ENCODE measurements at regions of chr14 and their contacts with region 1.

Region 1: GRCh38 chr14:39897657-39898056 is 465.4 kb upstream of the FBXO33 start:
- DNase-seq: no peak
- ATAC-seq: no peak
- H3K4me3 ChIP-seq: no peak overlapping the region
- H3K27ac ChIP-seq: no peak overlapping the region
- H3K4me1 ChIP-seq: no peaks in the 10 kb centered on the region
- H3K27me3 ChIP-seq: no peaks in the 10 kb centered on the region
- CTCF ChIP-seq: no peak

Region 2: GRCh38 chr14:39739796-39740195 is 157.9 kb before region 1 on chr14:
- CTCF ChIA-PET with region 1: no interaction called
- POLR2A ChIA-PET with region 1: interaction called, 13 read pairs
- in situ Hi-C with region 1: no loop called
- intact Hi-C with region 1: no loop called
- DNase-seq: no peak
- ATAC-seq: no peak
- H3K4me3 ChIP-seq: no peak overlapping the region
- H3K27ac ChIP-seq: no peak overlapping the region
- H3K4me1 ChIP-seq: no peaks in the 10 kb centered on the region
- H3K27me3 ChIP-seq: no peaks in the 10 kb centered on the region
- CTCF ChIP-seq: no peak

Measured in Panc1 (cell line).